ENCODE measurements at regions of chr15 and their contacts with region 1.

Region 1: GRCh38 chr15:98671060-98672008 is 23.0 kb downstream of the IGF1R start:
- DNase-seq: peak; percentile 69
- ATAC-seq: peak; percentile 67
- H3K4me3 ChIP-seq: no peak overlapping the region
- H3K27ac ChIP-seq: peak overlapping the region; percentile 89
- H3K4me1 ChIP-seq: peaks cover 46% of the 10 kb centered on the region
- H3K27me3 ChIP-seq: no peaks in the 10 kb centered on the region
- CTCF ChIP-seq: no peak
- POLR2A ChIP-seq: no peak
- RAD21 ChIP-seq: no peak

Region 2: DNA sequence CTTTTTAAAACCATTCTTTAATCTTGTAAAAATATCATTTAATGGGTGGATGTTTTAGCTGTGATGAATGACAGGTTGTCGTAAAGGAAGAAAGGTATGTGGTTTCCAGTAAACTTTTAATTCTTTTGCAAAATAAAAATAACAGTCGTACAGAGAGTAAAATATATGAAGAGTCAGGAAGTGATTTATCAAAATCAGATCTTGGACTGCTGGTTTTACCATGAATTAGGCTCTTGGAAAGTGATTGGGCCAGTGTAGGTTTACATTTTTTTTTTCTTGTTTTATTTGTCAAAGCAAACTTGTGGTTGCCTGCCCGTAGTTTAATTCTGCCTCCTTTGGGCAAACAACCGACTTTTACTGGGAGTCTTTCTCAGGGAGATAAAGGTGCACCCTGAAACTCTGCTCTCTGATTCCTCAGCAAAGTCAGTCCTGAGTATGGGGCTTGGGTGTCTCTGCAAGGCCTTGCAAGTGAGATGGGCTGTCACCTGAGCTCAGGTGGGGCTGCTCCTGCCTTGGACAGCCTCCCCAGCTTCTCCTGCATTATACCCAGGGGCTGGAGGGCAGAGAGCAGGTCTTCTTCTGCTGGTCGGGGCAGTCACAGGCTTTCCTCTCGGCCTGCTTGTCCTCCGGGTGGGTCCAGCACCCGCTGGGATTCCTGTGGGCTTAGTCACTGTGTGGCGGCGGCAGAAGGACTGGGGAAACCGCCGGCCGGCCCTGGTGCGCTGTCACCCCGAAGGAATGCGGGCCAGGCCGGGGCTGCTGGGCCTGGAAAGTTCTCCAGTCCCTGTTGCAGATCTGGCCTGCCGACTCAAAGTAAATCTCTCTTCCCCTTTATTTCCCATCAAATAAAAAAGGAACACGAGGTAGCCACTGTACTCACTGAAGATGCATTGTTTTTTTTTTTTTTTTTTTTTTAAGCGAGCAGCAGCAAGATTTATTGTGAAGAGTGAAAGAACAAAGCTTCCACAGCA is 56.1 kb after region 1 on chr15:
- CTCF ChIA-PET with region 1: interaction called, 3 read pairs
- POLR2A ChIA-PET with region 1: no interaction called
- dilution Hi-C with region 1: no loop called
- in situ Hi-C with region 1: no loop called
- intact Hi-C with region 1: loop called (anchors 5 kb)
- DNase-seq: peak; percentile 93
- ATAC-seq: peak; percentile 98
- H3K4me3 ChIP-seq: peak overlapping the region; percentile 16; the same call in 1 of the 2 replicates
- H3K27ac ChIP-seq: peak overlapping the region; percentile 98
- H3K4me1 ChIP-seq: peaks cover 32% of the 10 kb centered on the region
- H3K27me3 ChIP-seq: no peaks in the 10 kb centered on the region
- CTCF ChIP-seq: no peak
- POLR2A ChIP-seq: no peak
- RAD21 ChIP-seq: no peak

Measured in IMR-90 (cell line).